BJ (cell line): ENCODE measurements at regions of chr7 and their contacts with region 1.

Region 1: GRCh38 chr7:130887182-130888016 is 153.4 kb upstream of the KLF14 start:
- DNase-seq: peak; percentile 80
- H3K4me3 ChIP-seq: no peak overlapping the region
- H3K27me3 ChIP-seq: no peaks in the 10 kb centered on the region
- CTCF ChIP-seq: no peak

Region 2: GRCh38 chr7:129522088-129522970 is 1365.1 kb before region 1 on chr7:
- CTCF ChIA-PET with region 1: no interaction called
- POLR2A ChIA-PET with region 1: interaction called, 13 read pairs
- DNase-seq: no peak
- H3K4me3 ChIP-seq: no peak overlapping the region
- H3K27me3 ChIP-seq: peaks cover 9% of the 10 kb centered on the region
- CTCF ChIP-seq: no peak

Region 3: DNA sequence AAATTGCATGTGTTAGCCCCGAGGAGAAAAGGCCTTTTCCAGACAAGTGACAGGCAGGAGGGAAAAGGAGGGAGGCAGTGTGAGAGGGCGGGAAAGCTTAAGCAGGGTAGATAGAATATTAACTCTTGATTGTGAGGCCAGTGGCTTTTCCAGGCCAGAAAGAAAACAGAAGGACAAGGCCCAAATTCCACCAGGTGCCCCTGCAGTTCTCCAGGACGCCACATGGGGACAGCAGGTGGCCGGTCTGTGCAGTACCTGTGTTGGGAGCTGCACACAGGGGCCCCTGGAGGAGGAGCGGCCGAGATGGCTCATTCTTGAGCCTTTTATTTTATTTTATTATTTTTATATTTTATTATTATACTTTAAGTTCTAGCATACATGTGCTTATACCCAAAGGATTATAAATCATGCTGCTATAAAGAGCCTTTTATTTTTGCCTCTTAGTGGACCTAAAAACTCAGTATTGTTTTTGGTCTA is 12.1 kb before region 1 on chr7:
- CTCF ChIA-PET with region 1: interaction called, 12 read pairs
- POLR2A ChIA-PET with region 1: interaction called, 5 read pairs
- DNase-seq: no peak
- H3K4me3 ChIP-seq: no peak overlapping the region
- H3K27me3 ChIP-seq: no peaks in the 10 kb centered on the region
- CTCF ChIP-seq: peak; percentile 82